HEK293 (cell line): ENCODE measurements at regions of chr17 and their contacts with region 1.

Region 1: DNA sequence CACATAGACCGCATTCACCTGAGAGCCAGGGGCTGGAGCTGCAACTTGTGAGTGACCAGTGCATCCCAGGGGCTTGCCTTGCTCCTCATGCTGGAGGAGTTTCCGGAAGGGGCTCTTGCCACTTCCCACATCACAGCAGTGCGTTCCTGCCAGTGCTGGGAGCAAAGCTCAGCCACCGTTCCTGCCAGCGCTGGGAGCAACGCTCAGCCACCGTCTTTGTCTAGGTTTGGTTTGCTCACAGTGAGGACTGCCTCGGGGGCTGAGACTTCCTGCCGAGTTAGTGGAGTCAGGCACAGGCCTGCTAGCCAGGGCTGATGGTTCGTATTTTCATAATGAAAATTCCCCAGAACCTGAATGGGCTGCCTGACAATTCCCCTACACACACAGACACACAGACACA is 5.4 kb upstream of the CHRNE start:
- H3K4me3 ChIP-seq: no peak overlapping the region
- H3K27ac ChIP-seq: no peak overlapping the region
- H3K4me1 ChIP-seq: no peaks in the 10 kb centered on the region; the same call in 1 of the 2 replicates
- CTCF ChIP-seq: no peak

Region 2: DNA sequence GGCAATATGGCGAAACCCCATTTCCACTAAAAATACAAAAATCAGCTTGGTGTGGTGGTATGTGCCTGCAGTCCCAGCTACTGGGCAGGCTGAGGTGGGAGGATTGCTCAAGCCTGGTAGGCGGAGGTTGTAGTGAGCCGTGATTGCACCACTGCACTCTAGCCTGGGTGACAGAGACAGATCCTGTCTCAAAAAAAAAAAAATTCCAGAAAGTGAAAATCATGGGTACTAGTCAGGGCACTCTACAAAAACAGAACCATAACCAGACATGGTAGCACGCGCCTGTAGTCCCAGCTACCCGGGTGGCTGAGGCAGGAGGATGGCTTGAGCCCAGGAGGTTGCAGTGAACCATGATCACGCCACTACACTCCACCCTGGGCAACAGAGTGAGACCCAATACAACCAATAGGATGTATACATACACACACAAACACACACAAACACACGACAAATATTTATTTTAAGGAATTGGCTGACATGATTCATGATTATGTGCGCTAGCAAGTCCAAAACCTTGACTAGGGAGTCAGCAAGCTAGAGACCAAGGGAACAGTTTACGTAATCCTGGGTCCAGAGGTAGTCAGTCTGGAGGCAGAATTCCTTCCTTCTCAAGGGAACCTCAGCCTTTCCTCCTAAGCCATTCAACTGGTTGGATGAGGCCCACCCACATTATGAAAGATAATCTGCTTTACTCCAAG is 12.2 kb after region 1 on chr17:
- CTCF ChIA-PET with region 1: interaction called, 14 read pairs
- POLR2A ChIA-PET with region 1: interaction called, 3 read pairs
- H3K4me3 ChIP-seq: no peak overlapping the region
- H3K27ac ChIP-seq: no peak overlapping the region
- H3K4me1 ChIP-seq: no peaks in the 10 kb centered on the region
- CTCF ChIP-seq: no peak

Region 3: DNA sequence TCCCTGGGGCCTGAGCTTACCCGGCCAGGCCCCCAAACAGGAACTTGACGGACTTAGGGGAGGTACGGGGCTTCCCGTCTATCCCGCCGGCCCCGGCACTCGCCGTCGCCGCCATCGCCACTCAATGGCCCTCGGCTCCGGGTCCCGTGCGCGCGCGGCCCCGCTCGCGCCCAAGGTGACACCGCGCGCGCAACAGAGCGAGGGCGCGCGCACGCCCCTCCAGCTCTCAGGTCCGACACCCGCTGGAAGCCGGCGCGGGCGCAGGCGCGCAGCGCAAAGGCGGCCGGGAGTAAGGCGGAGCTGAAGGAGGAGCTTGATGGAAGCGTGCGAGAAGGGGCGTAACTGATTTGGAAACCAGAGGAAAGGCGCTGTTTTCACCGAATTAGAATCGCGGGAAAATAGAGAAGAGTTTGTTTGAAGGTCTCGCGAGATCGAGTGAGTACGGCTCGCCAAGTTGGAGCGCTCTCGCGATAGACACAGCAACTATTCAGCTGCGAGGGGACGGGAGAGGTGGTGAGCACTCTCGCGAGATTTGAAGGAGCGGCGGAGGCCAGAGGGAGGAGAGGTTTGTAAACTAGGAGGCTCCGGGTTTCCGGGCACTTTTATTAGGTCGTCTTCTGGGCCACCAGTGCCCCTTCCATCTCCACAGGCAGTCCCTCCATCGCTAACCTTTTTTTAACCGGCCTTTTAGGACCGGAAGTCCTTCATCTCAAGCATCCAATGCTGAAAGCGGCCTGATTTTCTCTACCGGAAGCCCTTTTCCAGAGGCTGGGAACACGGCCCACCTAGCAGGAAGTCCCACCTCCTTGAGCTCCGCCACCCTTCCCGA is 31.7 kb after region 1 on chr17 and contains the starts of genes RNF167 and SLC25A11:
- CTCF ChIA-PET with region 1: interaction called, 20 read pairs
- POLR2A ChIA-PET with region 1: interaction called, 19 read pairs
- H3K4me3 ChIP-seq: peak within 1 kb of the TSS; percentile 87
- H3K27ac ChIP-seq: peak within 1 kb of the TSS; percentile 93
- H3K4me1 ChIP-seq: peaks cover 9% of the 10 kb centered on the region
- CTCF ChIP-seq: no peak

Region 4: DNA sequence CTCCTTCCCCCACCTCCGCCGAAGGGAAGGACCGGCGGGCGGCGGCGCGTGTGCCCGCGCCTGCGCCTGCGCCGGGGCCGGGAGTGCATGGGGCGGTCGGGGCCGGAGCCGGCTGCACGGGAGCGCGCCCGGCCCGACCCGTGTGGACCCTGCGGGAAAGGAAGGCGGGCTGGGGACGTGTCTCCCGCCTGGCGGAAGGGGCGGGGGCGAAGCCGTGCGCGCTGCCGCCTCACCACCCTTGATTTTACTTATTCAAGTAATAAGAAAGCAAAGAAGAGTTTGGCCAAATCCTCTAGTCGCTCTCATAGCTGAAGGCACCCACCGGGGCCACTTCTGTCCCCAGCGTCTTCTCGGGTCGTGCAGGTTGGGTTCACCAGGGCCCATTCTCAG is 40.6 kb after region 1 on chr17:
- CTCF ChIA-PET with region 1: interaction called, 11 read pairs
- POLR2A ChIA-PET with region 1: no interaction called
- H3K4me3 ChIP-seq: peak overlapping the region; percentile 97
- H3K27ac ChIP-seq: peak overlapping the region; percentile 99
- H3K4me1 ChIP-seq: peaks cover 21% of the 10 kb centered on the region
- CTCF ChIP-seq: no peak

Region 5: DNA sequence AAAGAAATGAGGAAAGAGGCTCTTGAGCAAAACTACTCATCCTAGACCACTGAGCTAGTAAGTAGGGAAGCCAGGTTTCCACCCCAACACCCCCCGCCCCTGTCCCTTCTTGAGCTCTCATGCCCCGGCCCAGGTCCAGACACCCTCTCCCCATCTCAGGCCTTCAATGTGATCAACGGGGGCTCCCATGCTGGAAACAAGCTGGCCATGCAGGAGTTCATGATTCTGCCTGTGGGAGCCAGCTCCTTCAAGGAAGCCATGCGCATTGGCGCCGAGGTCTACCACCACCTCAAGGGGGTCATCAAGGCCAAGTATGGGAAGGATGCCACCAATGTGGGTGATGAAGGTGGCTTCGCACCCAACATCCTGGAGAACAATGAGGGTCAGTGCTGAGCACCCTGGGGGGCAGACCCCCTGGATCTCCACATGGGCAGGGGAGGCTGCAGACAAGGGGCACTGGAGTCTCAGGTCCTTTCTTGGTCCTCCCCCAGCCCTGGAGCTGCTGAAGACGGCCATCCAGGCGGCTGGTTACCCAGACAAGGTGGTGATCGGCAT is 46.7 kb after region 1 on chr17:
- CTCF ChIA-PET with region 1: interaction called, 11 read pairs
- POLR2A ChIA-PET with region 1: interaction called, 5 read pairs
- H3K4me3 ChIP-seq: no peak overlapping the region
- H3K27ac ChIP-seq: no peak overlapping the region
- H3K4me1 ChIP-seq: peaks cover 8% of the 10 kb centered on the region
- CTCF ChIP-seq: no peak

Region 6: DNA sequence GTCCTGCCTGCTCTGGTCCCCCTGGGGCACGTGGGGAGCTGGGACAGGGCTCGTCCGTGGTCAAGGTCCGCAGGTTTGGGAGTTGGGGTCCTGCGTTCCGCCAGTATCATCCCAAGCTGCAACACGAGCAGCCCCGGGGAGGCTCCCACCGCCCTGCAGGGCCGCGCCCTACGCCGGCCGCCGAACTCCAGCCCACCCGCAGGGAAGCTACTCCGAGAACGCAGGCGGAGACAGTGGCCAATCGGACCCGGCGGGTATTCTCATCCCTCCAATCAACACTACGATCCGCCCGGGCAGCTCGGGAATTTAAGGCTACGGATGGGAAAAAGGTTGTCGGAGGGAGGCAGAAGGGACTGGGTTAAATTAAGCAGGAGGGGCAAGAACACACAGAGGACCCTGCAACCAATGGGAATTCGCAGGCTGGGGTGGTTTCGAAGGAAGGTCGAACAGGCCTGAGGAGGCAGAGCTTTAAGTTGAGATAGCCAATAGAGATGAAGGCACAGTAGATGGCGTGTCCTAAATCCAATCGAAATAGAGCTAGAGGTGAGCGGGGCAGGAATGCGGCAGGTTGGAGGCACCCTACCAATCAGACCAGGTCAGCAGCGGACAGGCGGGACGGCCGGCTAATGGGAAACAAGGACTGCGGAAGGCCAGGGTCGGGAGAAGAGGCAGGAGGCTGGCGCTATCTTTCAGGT is 58.7 kb after region 1 on chr17:
- CTCF ChIA-PET with region 1: interaction called, 22 read pairs
- POLR2A ChIA-PET with region 1: interaction called, 27 read pairs
- H3K4me3 ChIP-seq: peak overlapping the region; percentile 70
- H3K27ac ChIP-seq: peak overlapping the region; percentile 97
- H3K4me1 ChIP-seq: peaks cover 15% of the 10 kb centered on the region
- CTCF ChIP-seq: no peak

Region 7: GRCh38 chr17:5055543-5055942 is 147.2 kb after region 1 on chr17:
- CTCF ChIA-PET with region 1: interaction called, 23 read pairs
- POLR2A ChIA-PET with region 1: no interaction called
- H3K4me3 ChIP-seq: no peak overlapping the region
- H3K27ac ChIP-seq: no peak overlapping the region
- H3K4me1 ChIP-seq: no peaks in the 10 kb centered on the region
- CTCF ChIP-seq: no peak